ENCODE measurements at regions of chr4 and their contacts with region 1.

Region 1: GRCh38 chr4:151143162-151143561 is 43.7 kb downstream of the RPS3A start:
- DNase-seq: no peak
- H3K4me3 ChIP-seq: no peak overlapping the region
- H3K27ac ChIP-seq: no peak overlapping the region
- H3K4me1 ChIP-seq: no peaks in the 10 kb centered on the region
- H3K27me3 ChIP-seq: no peaks in the 10 kb centered on the region
- CTCF ChIP-seq: no peak

Region 2: GRCh38 chr4:151184523-151185458 is 41.6 kb after region 1 on chr4:
- CTCF ChIA-PET with region 1: no interaction called
- POLR2A ChIA-PET with region 1: interaction called, 10 read pairs
- intact Hi-C with region 1: no loop called
- DNase-seq: no peak
- H3K4me3 ChIP-seq: no peak overlapping the region
- H3K27ac ChIP-seq: no peak overlapping the region
- H3K4me1 ChIP-seq: no peaks in the 10 kb centered on the region
- H3K27me3 ChIP-seq: no peaks in the 10 kb centered on the region
- CTCF ChIP-seq: no peak

Region 3: GRCh38 chr4:151315212-151315886 is 172.2 kb after region 1 on chr4:
- CTCF ChIA-PET with region 1: no interaction called
- POLR2A ChIA-PET with region 1: no interaction called
- intact Hi-C with region 1: no loop called
- DNase-seq: no peak
- H3K4me3 ChIP-seq: no peak overlapping the region
- H3K27ac ChIP-seq: no peak overlapping the region
- H3K4me1 ChIP-seq: no peaks in the 10 kb centered on the region
- H3K27me3 ChIP-seq: no peaks in the 10 kb centered on the region
- CTCF ChIP-seq: no peak

Measured in A673 (cell line).